ENCODE measurements at regions of chr7 and their contacts with region 1.

Region 1: GRCh38 chr7:47600199-47601118 is 18.5 kb upstream of the TNS3 start:
- DNase-seq: peak; percentile 85
- ATAC-seq: peak; percentile 66
- H3K4me3 ChIP-seq: peak overlapping the region; percentile 42; the same call in 1 of the 2 replicates
- H3K27ac ChIP-seq: peak overlapping the region; percentile 93
- H3K4me1 ChIP-seq: peaks cover 49% of the 10 kb centered on the region
- H3K27me3 ChIP-seq: no peaks in the 10 kb centered on the region
- CTCF ChIP-seq: no peak

Region 2: GRCh38 chr7:47635091-47636080 is 34.9 kb after region 1 on chr7:
- CTCF ChIA-PET with region 1: no interaction called
- POLR2A ChIA-PET with region 1: interaction called, 3 read pairs
- intact Hi-C with region 1: loop called (anchors 2 kb)
- DNase-seq: peak; percentile 67
- ATAC-seq: peak; percentile 83
- H3K4me3 ChIP-seq: peak overlapping the region; percentile 52
- H3K27ac ChIP-seq: 0 out of 2 replicates have a peak overlapping the region, but pooled peaks have one; percentile 14
- H3K4me1 ChIP-seq: peaks cover 21% of the 10 kb centered on the region
- H3K27me3 ChIP-seq: no peaks in the 10 kb centered on the region
- CTCF ChIP-seq: no peak

Region 3: DNA sequence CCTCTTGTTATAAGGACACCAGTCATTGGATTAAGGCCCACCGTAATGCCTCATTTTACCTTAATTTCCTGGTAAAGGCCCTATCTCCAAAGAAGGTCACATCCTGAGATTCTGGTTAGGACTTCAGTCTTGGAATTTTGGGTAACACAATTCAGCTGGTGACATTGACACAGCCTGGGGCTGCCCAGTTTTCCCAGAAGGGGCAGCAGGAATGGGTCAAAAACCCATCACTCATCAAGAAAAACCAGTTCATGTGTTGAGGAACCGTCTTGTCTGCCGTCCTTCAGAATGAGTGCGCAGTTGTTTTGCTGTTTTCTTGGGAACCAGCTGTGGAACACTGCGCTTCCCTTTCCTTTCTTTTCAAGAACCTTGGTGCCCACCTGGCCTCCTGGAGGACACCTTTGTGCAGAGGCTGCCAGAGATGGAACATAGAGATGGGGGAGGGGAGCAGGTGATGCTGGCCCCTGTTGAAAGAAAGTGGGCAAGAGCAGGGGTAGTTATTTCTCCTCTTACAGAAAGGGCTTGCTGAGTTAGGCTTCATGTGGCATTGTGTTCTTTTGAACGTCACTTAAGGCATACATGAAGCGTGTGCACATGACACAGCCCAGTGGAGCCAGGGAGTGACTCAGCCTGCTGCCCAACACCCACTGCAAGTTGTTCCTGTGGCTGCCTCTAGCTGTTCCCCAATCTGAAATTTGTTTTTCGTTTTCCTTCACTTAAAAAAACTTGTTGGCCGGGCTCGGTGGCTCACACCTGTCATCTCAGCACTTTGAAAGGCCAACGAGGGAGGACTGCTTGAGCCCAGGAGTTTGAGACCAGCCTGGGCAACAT is 68.8 kb after region 1 on chr7:
- CTCF ChIA-PET with region 1: no interaction called
- POLR2A ChIA-PET with region 1: no interaction called
- intact Hi-C with region 1: loop called (anchors 2 kb)
- DNase-seq: peak; percentile 92
- ATAC-seq: peak; percentile 100
- H3K4me3 ChIP-seq: no peak overlapping the region
- H3K27ac ChIP-seq: peak overlapping the region; percentile 78
- H3K4me1 ChIP-seq: peaks cover 14% of the 10 kb centered on the region
- H3K27me3 ChIP-seq: no peaks in the 10 kb centered on the region
- CTCF ChIP-seq: no peak

Measured in PC-3 (cell line).